AG04450 (cell line): ENCODE measurements at regions of chr7 and their contacts with region 1.

Region 1: DNA sequence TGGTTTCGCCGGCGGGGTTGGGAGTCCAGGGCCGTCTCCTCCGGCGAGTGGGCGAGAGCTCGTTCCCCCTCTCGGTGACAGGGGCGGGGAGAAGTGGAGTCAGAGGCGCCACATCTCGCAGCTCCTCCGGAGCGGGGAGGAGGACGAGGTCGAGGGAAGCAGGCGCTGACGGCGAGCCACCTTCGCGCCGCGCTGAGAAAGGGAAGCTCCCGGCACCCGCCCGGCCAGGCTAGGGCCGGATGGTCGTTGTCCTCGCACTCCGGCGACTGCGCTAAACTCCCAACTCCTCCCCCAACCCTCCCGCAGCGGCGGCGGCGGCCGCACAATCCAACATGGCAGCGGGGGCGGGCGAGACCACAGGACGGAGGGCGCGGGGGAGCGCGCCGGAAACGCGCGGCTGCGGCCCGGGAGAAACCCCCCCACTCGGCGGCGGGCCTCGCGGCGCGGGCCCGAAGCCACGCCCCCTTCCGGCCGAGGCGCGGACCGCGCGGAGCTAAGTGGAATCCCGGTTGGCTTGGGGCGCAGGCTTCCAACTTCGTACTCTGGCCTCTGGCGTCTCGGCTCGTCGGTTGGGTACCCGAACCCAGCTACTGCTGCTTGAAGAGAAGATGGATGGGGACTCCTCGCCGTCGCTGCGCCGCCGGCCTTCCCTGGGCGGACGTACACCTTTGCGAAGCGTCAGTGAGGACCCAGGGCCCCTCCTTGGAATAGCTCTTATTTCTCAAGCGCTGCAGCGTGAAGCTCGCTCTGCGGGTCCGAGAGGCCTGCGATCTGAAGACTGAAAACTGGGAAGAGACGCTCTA is at the start of gene WASL:
- DNase-seq: peak; percentile 65
- H3K4me3 ChIP-seq: peak within 1 kb of the TSS; percentile 81
- H3K27ac ChIP-seq: peak within 1 kb of the TSS; percentile 96
- H3K27me3 ChIP-seq: no peaks in the 10 kb centered on the region
- CTCF ChIP-seq: no peak; the same call in 1 of the 2 replicates
- polyA plus RNA-seq, gene WASL: 11.6 and 11.9 TPM in 2 replicates

Region 2: GRCh38 chr7:123727071-123727837 is 21.7 kb before region 1 on chr7:
- CTCF ChIA-PET with region 1: interaction called, 7 read pairs
- POLR2A ChIA-PET with region 1: interaction called, 32 read pairs
- DNase-seq: peak; percentile 54
- H3K4me3 ChIP-seq: no peak overlapping the region
- H3K27ac ChIP-seq: no peak overlapping the region
- H3K27me3 ChIP-seq: no peaks in the 10 kb centered on the region
- CTCF ChIP-seq: no peak

Region 3: GRCh38 chr7:123738356-123738755 is 10.6 kb before region 1 on chr7:
- CTCF ChIA-PET with region 1: interaction called, 11 read pairs
- POLR2A ChIA-PET with region 1: interaction called, 4 read pairs
- DNase-seq: no peak
- H3K4me3 ChIP-seq: no peak overlapping the region
- H3K27ac ChIP-seq: no peak overlapping the region
- H3K27me3 ChIP-seq: no peaks in the 10 kb centered on the region
- CTCF ChIP-seq: no peak

Region 4: GRCh38 chr7:123763181-123764020 is 14.5 kb after region 1 on chr7:
- CTCF ChIA-PET with region 1: no interaction called
- POLR2A ChIA-PET with region 1: no interaction called
- DNase-seq: no peak
- H3K4me3 ChIP-seq: no peak overlapping the region
- H3K27ac ChIP-seq: no peak overlapping the region
- H3K27me3 ChIP-seq: no peaks in the 10 kb centered on the region
- CTCF ChIP-seq: no peak